ENCODE measurements at regions of chrX and their contacts with region 1.

Region 1: DNA sequence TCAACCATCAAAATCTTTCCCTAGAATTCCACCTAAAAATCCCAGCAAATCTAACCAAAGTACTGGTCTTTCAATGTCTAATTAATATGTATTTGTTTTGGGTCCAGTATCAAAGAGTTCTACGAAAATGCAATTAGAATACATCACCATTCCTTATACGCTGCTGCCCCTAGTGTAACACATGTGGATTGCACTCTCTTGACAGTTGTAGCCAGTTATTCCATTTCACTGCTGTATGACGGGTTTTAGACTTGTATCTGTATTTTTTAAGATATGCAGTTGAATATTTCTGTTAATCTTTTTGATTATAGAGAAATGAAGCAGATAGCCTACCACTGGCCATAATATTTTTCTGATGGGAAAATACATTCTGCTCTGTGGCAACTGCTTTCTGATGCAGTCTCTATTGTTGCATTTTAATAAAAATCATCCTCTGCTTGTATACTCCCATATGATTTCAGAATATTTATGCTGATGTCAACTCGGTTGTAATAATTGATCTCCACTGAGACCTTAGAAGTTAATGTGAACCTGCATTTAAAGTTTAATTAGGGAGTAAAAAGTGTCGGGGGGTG is 17.1 kb upstream of the PAGE2B start:
- DNase-seq: no peak
- H3K4me3 ChIP-seq: peak overlapping the region in 2 of 4 donors; percentile 1 to 15
- H3K27ac ChIP-seq: no peak overlapping the region
- H3K4me1 ChIP-seq: no peaks in the 10 kb centered on the region
- H3K27me3 ChIP-seq: no peaks in the 10 kb centered on the region
- CTCF ChIP-seq: peak; percentile 51 to 65 (median 56)
- EP300 ChIP-seq: no peak
- POLR2A ChIP-seq: no peak

Region 2: DNA sequence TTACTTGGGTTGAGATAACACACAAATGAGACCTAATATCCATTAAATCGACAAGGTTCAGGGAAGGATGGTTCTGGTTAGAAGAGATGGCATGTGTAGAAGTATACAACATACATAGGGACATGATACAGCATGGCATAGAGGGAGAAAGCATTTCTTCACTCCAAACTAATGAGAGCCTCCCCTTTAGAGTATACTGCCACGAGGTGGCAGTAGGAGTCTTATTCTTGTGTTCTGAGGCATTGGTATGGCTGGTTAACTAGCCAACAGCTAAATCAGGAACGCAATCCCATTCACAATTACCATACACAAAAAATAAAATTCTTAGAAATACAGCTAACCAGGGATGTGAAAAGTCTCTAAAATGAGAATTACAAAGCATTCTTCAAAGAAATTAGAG is 166.2 kb before region 1 on chrX:
- intact Hi-C with region 1: loop called (anchors 5 kb)
- DNase-seq: no peak
- H3K4me3 ChIP-seq: no peak overlapping the region
- H3K27ac ChIP-seq: no peak overlapping the region
- H3K4me1 ChIP-seq: no peaks in the 10 kb centered on the region
- H3K27me3 ChIP-seq: no peaks in the 10 kb centered on the region
- CTCF ChIP-seq: peak in 1 of 4 experiments; percentile 35
- EP300 ChIP-seq: no peak
- POLR2A ChIP-seq: no peak